Transverse colon (tissue), 4 donors: ENCODE measurements at regions of chr14 and their contacts with region 1.

Region 1: GRCh38 chr14:58501214-58501816 is 73.8 kb downstream of the KIAA0586 start:
- DNase-seq: no peak
- H3K4me3 ChIP-seq: no peak overlapping the region
- H3K27ac ChIP-seq: no peak overlapping the region
- H3K4me1 ChIP-seq: no peaks in the 10 kb centered on the region
- H3K27me3 ChIP-seq: no peaks in the 10 kb centered on the region
- CTCF ChIP-seq: peak; percentile 76 to 83 (median 80)
- EP300 ChIP-seq: no peak
- POLR2A ChIP-seq: no peak

Region 2: DNA sequence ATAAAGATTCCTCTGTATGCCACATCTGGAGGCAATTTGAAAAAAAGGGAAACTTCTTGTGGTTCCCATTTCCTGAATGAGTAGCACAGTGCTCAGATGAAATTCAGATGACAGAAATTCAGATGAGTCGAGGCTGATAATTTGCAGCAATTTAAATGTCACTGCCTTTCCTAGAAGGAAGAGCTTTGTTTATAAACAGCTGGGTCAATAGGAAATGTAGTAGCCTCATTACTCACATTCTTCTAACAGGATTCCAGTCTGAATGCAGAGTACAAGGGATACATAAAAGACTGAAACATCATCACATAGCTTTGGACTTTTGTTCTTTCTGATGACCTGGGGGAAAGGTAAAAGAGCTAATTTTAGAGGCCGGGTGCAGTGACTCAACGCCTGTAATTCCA is 125.1 kb after region 1 on chr14:
- in situ Hi-C with region 1: no loop called
- intact Hi-C with region 1: loop called (anchors 10 kb)
- DNase-seq: no peak
- H3K4me3 ChIP-seq: no peak overlapping the region
- H3K27ac ChIP-seq: no peak overlapping the region
- H3K4me1 ChIP-seq: no peaks in the 10 kb centered on the region
- H3K27me3 ChIP-seq: no peaks in the 10 kb centered on the region
- CTCF ChIP-seq: no peak
- EP300 ChIP-seq: no peak
- POLR2A ChIP-seq: no peak

Region 3: GRCh38 chr14:59028476-59029202 is 527.3 kb after region 1 on chr14:
- in situ Hi-C with region 1: loop called in 1 of 4 experiments (anchors 25 kb)
- intact Hi-C with region 1: no loop called
- DNase-seq: peak; percentile 64
- H3K4me3 ChIP-seq: no peak overlapping the region
- H3K27ac ChIP-seq: no peak overlapping the region
- H3K4me1 ChIP-seq: peaks cover 0 to 3% (median 0%) of the 10 kb centered on the region in 4 donors
- H3K27me3 ChIP-seq: no peaks in the 10 kb centered on the region
- CTCF ChIP-seq: peak; percentile 58 to 78 (median 75)
- EP300 ChIP-seq: no peak
- POLR2A ChIP-seq: no peak

Region 4: DNA sequence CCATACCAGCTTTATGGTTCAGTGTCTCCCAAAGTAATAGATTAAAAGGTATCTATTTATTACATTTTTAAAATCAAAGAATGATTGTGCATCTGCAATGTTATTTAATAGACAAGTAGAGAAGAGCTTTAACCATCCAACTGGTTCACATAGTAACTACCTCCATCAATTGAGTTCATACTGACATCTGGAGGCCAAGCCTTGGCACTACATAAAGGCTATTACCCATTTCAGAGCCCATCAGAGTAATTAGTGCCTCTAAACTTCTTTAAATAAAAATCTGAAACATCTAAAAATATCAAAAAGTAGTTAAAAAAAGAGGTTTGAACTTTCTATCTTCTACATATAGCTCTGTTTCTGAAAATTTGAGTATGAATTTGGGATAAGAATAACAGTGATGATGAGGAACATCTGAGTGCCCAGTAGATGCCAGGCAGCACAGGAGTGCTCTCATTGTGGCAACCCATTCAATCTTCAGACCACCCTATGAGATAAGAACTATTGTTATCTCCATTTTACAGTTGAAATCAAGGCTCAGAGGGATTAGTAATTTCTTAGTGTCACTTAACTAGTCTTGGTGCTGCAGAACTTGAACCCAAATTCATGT is 554.2 kb after region 1 on chr14:
- in situ Hi-C with region 1: loop called in 3 of 4 experiments (anchors 5 to 25 kb)
- intact Hi-C with region 1: loop called (anchors 2 kb)
- DNase-seq: peak; percentile 17
- H3K4me3 ChIP-seq: no peak overlapping the region
- H3K27ac ChIP-seq: no peak overlapping the region
- H3K4me1 ChIP-seq: no peaks in the 10 kb centered on the region
- H3K27me3 ChIP-seq: no peaks in the 10 kb centered on the region
- CTCF ChIP-seq: peak; percentile 63 to 75 (median 67)
- EP300 ChIP-seq: no peak
- POLR2A ChIP-seq: no peak